Activated CD4-positive, alpha-beta T cell treated with anti-CD3 and anti-CD28 coated beads for 36 hours (primary cell): ENCODE measurements at regions of chr15 and their contacts with region 1.

Region 1: DNA sequence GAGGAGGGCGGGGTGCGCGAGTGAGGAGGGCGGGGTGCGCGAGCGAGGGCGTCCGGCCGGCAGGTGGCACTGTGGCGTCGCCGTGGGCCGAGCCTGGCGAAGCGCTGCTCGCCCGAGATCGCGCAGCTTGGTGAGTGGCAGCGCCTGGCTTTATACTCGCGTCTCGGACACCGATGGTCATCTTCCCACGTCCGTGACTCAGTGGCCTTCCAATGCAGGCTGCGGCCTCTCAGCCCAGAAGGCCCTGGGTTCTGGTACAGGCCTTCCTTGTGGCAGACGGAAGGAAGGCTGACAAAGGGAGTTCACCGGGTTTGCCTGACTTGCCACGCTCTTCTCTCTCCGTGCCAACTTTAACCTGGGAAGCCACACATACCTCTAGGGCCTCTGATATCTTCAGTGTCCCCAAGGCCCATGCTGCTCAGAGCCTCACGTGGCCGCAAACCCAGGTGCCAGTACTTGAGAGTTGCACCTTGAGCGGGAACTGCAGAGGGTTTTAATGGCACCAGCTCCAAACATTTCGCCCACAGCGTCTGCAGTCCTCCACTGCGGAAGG is 195.3 kb upstream of the LYSMD4 start:
- DNase-seq: peak; percentile 91
- ATAC-seq: peak; percentile 93
- H3K4me3 Mint-ChIP-seq: peak overlapping the region; percentile 80
- H3K27ac Mint-ChIP-seq: peak overlapping the region; percentile 81
- H3K4me1 Mint-ChIP-seq: peaks cover 17% of the 10 kb centered on the region
- H3K27me3 Mint-ChIP-seq: no peaks in the 10 kb centered on the region

Region 2: DNA sequence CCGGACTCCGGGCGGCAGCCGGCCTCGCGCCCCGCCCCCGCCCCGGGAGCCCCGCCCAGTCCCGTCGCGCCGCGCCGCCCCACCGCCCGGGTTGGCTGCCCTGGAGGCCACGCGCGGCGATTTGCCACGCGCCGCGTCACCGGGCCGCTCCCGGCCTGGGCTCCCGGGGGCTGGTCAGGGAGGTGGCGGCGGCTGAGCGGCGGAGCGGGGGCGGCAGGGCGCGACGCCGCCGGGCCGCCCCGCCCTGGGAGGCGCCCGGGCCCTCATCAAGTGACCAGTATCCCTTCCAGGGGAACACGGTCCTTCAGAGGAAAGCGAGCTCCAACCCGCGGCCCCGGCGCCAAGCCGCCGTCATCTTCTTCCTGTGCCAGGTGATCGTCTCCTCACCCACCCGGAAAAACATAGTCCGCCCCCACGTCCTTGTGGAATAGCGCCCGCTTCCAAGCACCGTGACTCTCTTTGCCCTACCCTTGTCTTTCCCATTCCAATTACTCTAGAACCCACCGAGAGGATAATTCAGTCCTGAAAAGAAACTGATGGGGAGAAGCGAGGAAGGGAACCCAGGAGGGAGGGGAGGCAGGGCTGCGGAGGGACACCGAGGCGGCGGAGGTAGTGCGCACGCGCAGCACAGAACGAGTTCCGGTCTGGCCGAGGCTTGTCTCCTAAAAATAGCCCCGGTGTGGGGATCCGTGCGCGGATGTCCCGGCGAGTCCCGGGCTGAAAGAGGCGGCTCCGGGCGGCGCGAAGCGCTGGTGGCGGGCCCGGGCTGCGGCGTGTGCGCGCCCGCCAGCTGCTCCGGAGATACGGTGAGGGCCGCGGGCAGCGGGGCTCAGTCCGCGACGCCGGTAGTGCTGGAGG is 363.0 kb before region 1 on chr15 and contains the start of gene MEF2A:
- CTCF ChIA-PET with region 1: no interaction called
- POLR2A ChIA-PET with region 1: no interaction called
- intact Hi-C with region 1: loop called in 1 of 2 experiments (anchors 5 kb)
- DNase-seq: peak; percentile 95
- ATAC-seq: peak; percentile 84
- H3K4me3 Mint-ChIP-seq: peak within 1 kb of the TSS; percentile 98
- H3K27ac Mint-ChIP-seq: peak within 1 kb of the TSS; percentile 96
- H3K4me1 Mint-ChIP-seq: peaks cover 21% of the 10 kb centered on the region
- H3K27me3 Mint-ChIP-seq: no peaks in the 10 kb centered on the region
- total RNA-seq, gene MEF2A: 16.5 to 20.9 TPM

Region 3: GRCh38 chr15:99818872-99819271 is 109.6 kb before region 1 on chr15:
- CTCF ChIA-PET with region 1: no interaction called
- POLR2A ChIA-PET with region 1: no interaction called
- intact Hi-C with region 1: loop called in 1 of 2 experiments (anchors 5 kb)
- DNase-seq: no peak
- ATAC-seq: no peak
- H3K4me3 Mint-ChIP-seq: no peak overlapping the region
- H3K27ac Mint-ChIP-seq: no peak overlapping the region
- H3K4me1 Mint-ChIP-seq: peaks cover 27% of the 10 kb centered on the region
- H3K27me3 Mint-ChIP-seq: no peaks in the 10 kb centered on the region

Region 4: GRCh38 chr15:99986297-99987118 is 58.0 kb after region 1 on chr15:
- CTCF ChIA-PET with region 1: no interaction called
- POLR2A ChIA-PET with region 1: no interaction called
- intact Hi-C with region 1: no loop called
- DNase-seq: no peak
- ATAC-seq: peak; percentile 33
- H3K4me3 Mint-ChIP-seq: no peak overlapping the region
- H3K27ac Mint-ChIP-seq: no peak overlapping the region
- H3K4me1 Mint-ChIP-seq: peaks cover 7% of the 10 kb centered on the region
- H3K27me3 Mint-ChIP-seq: no peaks in the 10 kb centered on the region

Region 5: DNA sequence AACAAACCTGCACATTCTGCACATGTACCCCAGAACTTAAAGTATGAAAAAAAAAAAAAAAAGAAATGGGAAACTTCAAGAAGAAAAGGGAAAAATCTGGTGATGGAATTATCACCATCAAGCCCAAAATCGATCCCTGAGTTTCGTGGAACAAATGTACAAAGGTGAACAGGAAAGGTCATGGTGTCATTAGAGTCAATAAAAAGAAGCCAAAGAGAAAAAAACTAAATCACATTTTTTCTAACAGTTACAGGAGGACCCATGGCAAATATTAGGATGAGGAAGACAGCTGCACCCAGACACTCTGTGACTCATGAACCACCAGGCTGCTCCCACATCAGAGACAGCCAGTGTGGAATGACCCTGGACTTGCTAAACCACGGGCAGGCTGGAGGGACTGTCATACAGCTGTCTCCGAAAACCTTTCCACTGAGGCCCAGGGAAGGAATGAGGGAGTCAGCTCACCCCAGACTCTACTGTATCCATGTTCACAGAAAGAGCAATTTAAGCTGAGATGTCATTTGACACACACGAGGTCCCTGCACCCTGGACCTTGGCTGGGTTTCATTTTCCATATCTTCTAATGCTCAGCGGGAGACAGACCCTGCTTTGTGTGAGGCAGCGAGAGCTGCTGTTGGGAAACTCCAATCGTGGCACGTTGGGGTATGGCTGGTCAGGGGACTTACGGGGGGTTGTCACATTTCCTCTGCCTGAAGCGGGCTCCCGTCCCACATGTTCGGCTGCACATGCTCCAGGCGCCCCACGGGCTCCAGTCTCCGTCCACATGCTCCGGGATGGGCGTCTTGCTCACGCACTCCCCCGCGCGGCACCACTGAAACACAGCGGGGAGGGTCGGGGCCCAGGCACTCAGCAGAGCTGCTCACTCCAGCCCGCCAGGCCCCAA is 203.1 kb after region 1 on chr15:
- CTCF ChIA-PET with region 1: no interaction called
- POLR2A ChIA-PET with region 1: no interaction called
- intact Hi-C with region 1: loop called in 1 of 2 experiments (anchors 2 kb)
- DNase-seq: peak; percentile 67
- ATAC-seq: peak; percentile 80
- H3K4me3 Mint-ChIP-seq: no peak overlapping the region
- H3K27ac Mint-ChIP-seq: no peak overlapping the region
- H3K4me1 Mint-ChIP-seq: no peaks in the 10 kb centered on the region
- H3K27me3 Mint-ChIP-seq: no peaks in the 10 kb centered on the region

Region 6: DNA sequence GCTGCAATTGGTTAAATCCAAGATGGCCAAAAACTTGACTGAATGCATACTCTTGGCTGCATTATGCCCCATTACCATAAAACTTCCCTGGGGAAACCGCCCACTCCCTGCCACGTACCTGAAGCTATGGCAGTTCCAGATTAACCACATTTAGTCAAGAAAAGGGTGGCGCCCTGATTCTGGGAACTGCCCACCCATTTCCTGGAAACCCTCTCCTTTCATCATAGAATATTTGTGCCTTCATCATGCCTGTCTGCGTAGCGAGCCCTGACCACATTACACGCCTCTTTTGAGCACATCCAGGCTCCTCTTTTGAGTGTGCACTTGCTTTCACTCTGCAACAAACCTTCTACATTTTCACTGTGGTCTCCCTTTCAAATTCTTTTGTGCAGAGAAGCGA is 668.3 kb after region 1 on chr15:
- CTCF ChIA-PET with region 1: no interaction called
- POLR2A ChIA-PET with region 1: no interaction called
- intact Hi-C with region 1: loop called in 1 of 2 experiments (anchors 10 kb)
- DNase-seq: peak; percentile 96
- ATAC-seq: peak; percentile 82
- H3K4me3 Mint-ChIP-seq: peak overlapping the region; percentile 74
- H3K27ac Mint-ChIP-seq: peak overlapping the region; percentile 98
- H3K4me1 Mint-ChIP-seq: peaks cover 74% of the 10 kb centered on the region
- H3K27me3 Mint-ChIP-seq: no peaks in the 10 kb centered on the region

Region 7: GRCh38 chr15:100873029-100873677 is 944.6 kb after region 1 on chr15:
- CTCF ChIA-PET with region 1: no interaction called
- POLR2A ChIA-PET with region 1: no interaction called
- intact Hi-C with region 1: loop called in 1 of 2 experiments (anchors 2 kb)
- DNase-seq: peak; percentile 66
- ATAC-seq: peak; percentile 36
- H3K4me3 Mint-ChIP-seq: no peak overlapping the region
- H3K27ac Mint-ChIP-seq: no peak overlapping the region
- H3K4me1 Mint-ChIP-seq: no peaks in the 10 kb centered on the region
- H3K27me3 Mint-ChIP-seq: peaks cover 20% of the 10 kb centered on the region